Naive thymus-derived CD4-positive, alpha-beta T cell (primary cell): ENCODE measurements at regions of chr10 and their contacts with region 1.

Region 1: DNA sequence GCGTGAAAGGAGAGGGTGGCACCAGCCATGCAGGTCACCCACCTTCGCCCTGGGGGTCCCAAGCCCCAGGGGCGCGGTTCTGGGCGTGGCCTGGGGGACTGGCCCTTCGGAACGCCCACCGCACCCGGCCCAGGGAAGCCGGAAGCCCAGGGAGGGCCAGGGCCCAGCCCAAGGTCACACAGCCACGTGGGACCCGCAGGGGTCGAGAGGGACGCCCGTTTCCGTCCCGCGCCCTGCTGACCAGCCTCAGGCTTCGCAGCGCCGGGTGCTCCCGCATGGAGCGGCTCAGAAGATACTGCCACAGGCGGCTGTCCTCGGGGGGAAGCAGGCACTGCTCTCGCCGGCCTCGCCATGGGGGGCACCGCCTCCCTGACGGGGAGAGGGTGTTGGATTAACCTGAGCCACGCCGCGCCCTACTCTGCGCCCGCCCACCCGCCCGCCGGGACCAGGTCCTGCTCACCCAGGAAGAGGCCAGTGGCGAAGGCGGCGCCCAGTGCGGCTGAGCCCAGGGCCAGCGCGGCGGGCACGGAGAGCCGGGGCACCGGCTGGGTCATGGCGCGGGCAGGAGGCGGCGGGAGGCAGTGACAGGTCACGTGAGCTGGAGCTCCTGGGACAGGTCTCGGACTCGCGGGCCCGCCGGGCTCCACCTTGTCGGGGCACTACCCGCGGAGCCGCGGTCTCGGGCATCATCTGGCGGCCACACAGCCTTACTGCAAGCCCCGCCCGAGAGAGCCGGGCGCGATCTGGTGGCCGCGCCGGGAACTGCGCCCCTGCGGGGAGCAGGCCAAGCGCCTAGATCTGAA is at the start of gene COMTD1:
- DNase-seq: peak; percentile 82 to 96 (median 91)
- ATAC-seq: peak; percentile 82
- H3K4me3 ChIP-seq: peak within 1 kb of the TSS; percentile 80
- H3K4me3 Mint-ChIP-seq: peak within 1 kb of the TSS; percentile 74 to 88 (median 82)
- H3K27ac ChIP-seq: peak within 1 kb of the TSS; percentile 78
- H3K27ac Mint-ChIP-seq: peak within 1 kb of the TSS; percentile 73 to 97 (median 86)
- H3K4me1 ChIP-seq: peaks cover 4 to 11% of the 10 kb centered on the region in 2 donors
- H3K4me1 Mint-ChIP-seq: peaks cover 10 to 23% (median 16%) of the 10 kb centered on the region in 7 donors
- H3K27me3 ChIP-seq: no peaks in the 10 kb centered on the region
- H3K27me3 Mint-ChIP-seq: no peaks in the 10 kb centered on the region
- total RNA-seq, gene COMTD1: 10.1 to 29.2 (median 15.8) TPM

Region 2: GRCh38 chr10:73413528-73414229 is 1821.9 kb before region 1 on chr10 and contains the start of gene ANXA7:
- CTCF ChIA-PET with region 1: no interaction called
- POLR2A ChIA-PET with region 1: no interaction called
- intact Hi-C with region 1: loop called in 1 of 2 experiments (anchors 5 kb)
- DNase-seq: peak; percentile 78 to 93 (median 85)
- ATAC-seq: peak; percentile 99
- H3K4me3 ChIP-seq: peak within 1 kb of the TSS; percentile 78
- H3K4me3 Mint-ChIP-seq: peak within 1 kb of the TSS; percentile 82 to 97 (median 94)
- H3K27ac ChIP-seq: peak within 1 kb of the TSS; percentile 98
- H3K27ac Mint-ChIP-seq: peak within 1 kb of the TSS; percentile 83 to 95 (median 90)
- H3K4me1 ChIP-seq: peaks cover 8 to 16% of the 10 kb centered on the region in 2 donors
- H3K4me1 Mint-ChIP-seq: peaks cover 39 to 60% (median 53%) of the 10 kb centered on the region in 7 donors
- H3K27me3 ChIP-seq: no peaks in the 10 kb centered on the region
- H3K27me3 Mint-ChIP-seq: peaks cover 0 to 4% (median 0%) of the 10 kb centered on the region in 5 donors
- total RNA-seq, gene ANXA7: 74.8 to 118 (median 97.3) TPM

Region 3: DNA sequence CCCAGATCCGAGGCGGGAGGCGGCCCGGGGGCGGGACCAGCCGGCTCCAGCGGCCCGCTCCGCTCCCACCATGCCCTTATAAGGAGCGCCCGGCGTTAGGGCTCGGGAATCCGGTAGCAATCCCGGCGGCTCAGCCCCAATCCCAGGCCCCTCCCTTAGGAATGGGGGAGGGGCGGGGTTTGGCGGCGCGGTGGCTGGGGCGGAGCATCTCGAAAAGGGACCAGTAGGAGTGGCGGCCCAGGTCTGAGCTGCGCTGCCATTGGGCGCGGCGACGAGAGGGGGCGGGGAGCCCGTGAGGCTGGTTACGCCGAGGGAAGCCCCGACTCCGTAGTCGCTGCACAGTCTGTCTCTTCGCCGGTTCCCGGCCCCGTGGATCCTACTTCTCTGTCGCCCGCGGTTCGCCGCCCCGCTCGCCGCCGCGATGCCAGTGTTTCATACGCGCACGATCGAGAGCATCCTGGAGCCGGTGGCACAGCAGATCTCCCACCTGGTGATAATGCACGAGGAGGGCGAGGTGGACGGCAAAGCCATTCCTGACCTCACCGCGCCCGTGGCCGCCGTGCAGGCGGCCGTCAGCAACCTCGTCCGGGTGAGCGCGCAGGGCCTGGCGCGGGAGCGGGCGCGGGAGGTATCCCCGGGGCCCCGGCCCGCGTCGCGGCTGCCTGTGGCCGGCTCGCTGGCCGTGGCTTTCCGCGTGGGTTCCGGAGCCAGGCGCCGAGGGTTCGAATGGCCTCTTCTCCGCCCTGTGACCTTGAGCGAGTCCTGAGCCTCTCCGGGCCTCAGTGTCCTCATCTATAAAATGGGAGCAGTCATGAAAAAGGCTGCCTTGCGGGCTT is 1237.6 kb before region 1 on chr10 and contains the start of gene VCL:
- CTCF ChIA-PET with region 1: no interaction called
- POLR2A ChIA-PET with region 1: no interaction called
- intact Hi-C with region 1: loop called (anchors 5 to 10 kb)
- DNase-seq: peak; percentile 90 to 97 (median 95)
- ATAC-seq: peak; percentile 99
- H3K4me3 ChIP-seq: peak within 1 kb of the TSS; percentile 71
- H3K4me3 Mint-ChIP-seq: peak within 1 kb of the TSS; percentile 83 to 100 (median 97)
- H3K27ac ChIP-seq: peak within 1 kb of the TSS; percentile 91
- H3K27ac Mint-ChIP-seq: peak within 1 kb of the TSS; percentile 83 to 99 (median 98)
- H3K4me1 ChIP-seq: peaks cover 19 to 22% of the 10 kb centered on the region in 2 donors
- H3K4me1 Mint-ChIP-seq: peaks cover 43 to 53% (median 48%) of the 10 kb centered on the region in 7 donors
- H3K27me3 ChIP-seq: no peaks in the 10 kb centered on the region
- H3K27me3 Mint-ChIP-seq: no peaks in the 10 kb centered on the region
- total RNA-seq, gene VCL: 9.0 to 67.7 (median 21.6) TPM

Region 4: DNA sequence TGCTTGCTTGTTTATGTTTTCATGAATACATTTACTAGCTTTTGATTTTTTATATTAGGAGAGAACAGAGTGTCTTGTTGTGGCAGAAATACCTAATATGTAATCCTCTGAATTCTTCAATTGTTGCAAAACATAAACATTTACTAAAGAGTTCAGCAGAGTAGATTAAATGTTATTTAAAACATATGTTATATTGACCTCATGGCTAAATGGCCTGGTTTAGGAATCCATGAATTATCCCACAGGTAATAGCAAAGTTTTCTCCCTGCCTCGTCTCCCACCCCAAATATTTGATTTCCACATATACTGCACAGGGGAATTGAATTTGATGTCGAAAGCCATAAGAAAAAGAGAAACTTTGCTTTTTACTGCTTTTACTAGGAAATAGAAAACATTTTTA is 972.7 kb before region 1 on chr10:
- CTCF ChIA-PET with region 1: interaction called, 3 read pairs
- POLR2A ChIA-PET with region 1: no interaction called
- intact Hi-C with region 1: loop called (anchors 1 kb)
- DNase-seq: no peak
- ATAC-seq: no peak
- H3K4me3 ChIP-seq: no peak overlapping the region
- H3K4me3 Mint-ChIP-seq: no peak overlapping the region
- H3K27ac ChIP-seq: no peak overlapping the region
- H3K27ac Mint-ChIP-seq: peak overlapping the region in 1 of 9 donors; percentile 28
- H3K4me1 ChIP-seq: no peaks in the 10 kb centered on the region
- H3K4me1 Mint-ChIP-seq: peaks cover 4 to 24% (median 11%) of the 10 kb centered on the region in 7 donors
- H3K27me3 ChIP-seq: no peaks in the 10 kb centered on the region
- H3K27me3 Mint-ChIP-seq: no peaks in the 10 kb centered on the region

Region 5: DNA sequence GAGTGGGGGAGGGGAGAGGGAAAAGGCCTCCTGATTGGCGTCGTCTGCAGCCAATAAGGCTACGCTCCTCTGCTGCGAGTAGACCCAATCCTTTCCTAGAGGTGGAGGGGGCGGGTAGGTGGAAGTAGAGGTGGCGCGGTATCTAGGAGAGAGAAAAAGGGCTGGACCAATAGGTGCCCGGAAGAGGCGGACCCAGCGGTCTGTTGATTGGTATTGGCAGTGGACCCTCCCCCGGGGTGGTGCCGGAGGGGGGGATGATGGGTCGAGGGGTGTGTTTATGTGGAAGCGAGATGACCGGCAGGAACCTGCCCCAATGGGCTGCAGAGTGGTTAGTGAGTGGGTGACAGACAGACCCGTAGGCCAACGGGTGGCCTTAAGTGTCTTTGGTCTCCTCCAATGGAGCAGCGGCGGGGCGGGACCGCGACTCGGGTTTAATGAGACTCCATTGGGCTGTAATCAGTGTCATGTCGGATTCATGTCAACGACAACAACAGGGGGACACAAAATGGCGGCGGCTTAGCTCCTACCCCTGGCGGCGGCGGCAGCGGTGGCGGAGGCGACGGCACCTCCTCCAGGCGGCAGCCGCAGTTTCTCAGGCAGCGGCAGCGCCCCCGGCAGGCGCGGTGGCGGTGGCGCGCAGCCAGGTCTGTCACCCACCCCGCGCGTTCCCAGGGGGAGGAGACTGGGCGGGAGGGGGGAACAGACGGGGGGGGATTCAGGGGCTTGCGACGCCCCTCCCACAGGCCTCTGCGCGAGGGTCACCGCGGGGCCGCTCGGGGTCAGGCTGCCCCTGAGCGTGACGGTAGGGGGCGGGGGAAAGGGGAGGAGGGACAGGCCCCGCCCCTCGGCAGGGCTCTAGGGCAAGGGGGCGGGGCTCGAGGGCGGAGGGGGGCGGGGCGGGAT is 409.2 kb before region 1 on chr10 and contains the start of gene KAT6B:
- CTCF ChIA-PET with region 1: no interaction called
- POLR2A ChIA-PET with region 1: interaction called, 3 read pairs
- intact Hi-C with region 1: loop called (anchors 1 kb)
- DNase-seq: peak; percentile 93 to 100 (median 100)
- ATAC-seq: peak; percentile 86
- H3K4me3 ChIP-seq: peak within 1 kb of the TSS; percentile 86
- H3K4me3 Mint-ChIP-seq: peak within 1 kb of the TSS; percentile 90 to 98 (median 92)
- H3K27ac ChIP-seq: peak within 1 kb of the TSS; percentile 98
- H3K27ac Mint-ChIP-seq: peak within 1 kb of the TSS; percentile 92 to 99 (median 98)
- H3K4me1 ChIP-seq: peaks cover 22 to 50% of the 10 kb centered on the region in 2 donors
- H3K4me1 Mint-ChIP-seq: peaks cover 44 to 74% (median 69%) of the 10 kb centered on the region in 7 donors
- H3K27me3 ChIP-seq: no peaks in the 10 kb centered on the region
- H3K27me3 Mint-ChIP-seq: no peaks in the 10 kb centered on the region
- total RNA-seq, gene KAT6B: 33.2 to 80.5 (median 68.5) TPM

Region 6: GRCh38 chr10:75111367-75111906 is 124.1 kb before region 1 on chr10 and contains the start of gene SAMD8:
- CTCF ChIA-PET with region 1: interaction called, 5 read pairs
- POLR2A ChIA-PET with region 1: interaction called, 15 read pairs
- intact Hi-C with region 1: loop called (anchors 1 kb)
- DNase-seq: peak; percentile 90 to 98 (median 94)
- ATAC-seq: peak; percentile 92
- H3K4me3 ChIP-seq: peak within 1 kb of the TSS; percentile 90
- H3K4me3 Mint-ChIP-seq: peak within 1 kb of the TSS; percentile 81 to 98 (median 90)
- H3K27ac ChIP-seq: peak within 1 kb of the TSS; percentile 89
- H3K27ac Mint-ChIP-seq: peak within 1 kb of the TSS; percentile 86 to 98 (median 94)
- H3K4me1 ChIP-seq: peaks cover 14 to 16% of the 10 kb centered on the region in 2 donors
- H3K4me1 Mint-ChIP-seq: peaks cover 33 to 66% (median 62%) of the 10 kb centered on the region in 7 donors
- H3K27me3 ChIP-seq: no peaks in the 10 kb centered on the region
- H3K27me3 Mint-ChIP-seq: no peaks in the 10 kb centered on the region
- total RNA-seq, gene SAMD8: 14.8 to 31.7 (median 17.5) TPM

Region 7: GRCh38 chr10:75137533-75138438 is 97.8 kb before region 1 on chr10:
- CTCF ChIA-PET with region 1: no interaction called
- POLR2A ChIA-PET with region 1: no interaction called
- intact Hi-C with region 1: no loop called
- DNase-seq: no peak
- ATAC-seq: no peak
- H3K4me3 ChIP-seq: no peak overlapping the region
- H3K4me3 Mint-ChIP-seq: peak overlapping the region in 1 of 10 donors; percentile 42
- H3K27ac ChIP-seq: no peak overlapping the region
- H3K27ac Mint-ChIP-seq: peak overlapping the region in 7 of 9 donors; percentile 1 to 76 (median 18)
- H3K4me1 ChIP-seq: no peaks in the 10 kb centered on the region
- H3K4me1 Mint-ChIP-seq: peaks cover 25 to 63% (median 45%) of the 10 kb centered on the region in 7 donors
- H3K27me3 ChIP-seq: no peaks in the 10 kb centered on the region
- H3K27me3 Mint-ChIP-seq: no peaks in the 10 kb centered on the region